ENCODE measurements at regions of chr19 and their contacts with region 1.

Region 1: GRCh38 chr19:1090727-1091543 is 4.2 kb downstream of the POLR2E start:
- DNase-seq: no peak
- ATAC-seq: no peak
- H3K4me3 ChIP-seq: no peak overlapping the region
- H3K27ac ChIP-seq: no peak overlapping the region
- H3K4me1 ChIP-seq: peaks cover 5% of the 10 kb centered on the region; the same call in 1 of the 2 replicates
- H3K27me3 ChIP-seq: no peaks in the 10 kb centered on the region
- CTCF ChIP-seq: no peak

Region 2: DNA sequence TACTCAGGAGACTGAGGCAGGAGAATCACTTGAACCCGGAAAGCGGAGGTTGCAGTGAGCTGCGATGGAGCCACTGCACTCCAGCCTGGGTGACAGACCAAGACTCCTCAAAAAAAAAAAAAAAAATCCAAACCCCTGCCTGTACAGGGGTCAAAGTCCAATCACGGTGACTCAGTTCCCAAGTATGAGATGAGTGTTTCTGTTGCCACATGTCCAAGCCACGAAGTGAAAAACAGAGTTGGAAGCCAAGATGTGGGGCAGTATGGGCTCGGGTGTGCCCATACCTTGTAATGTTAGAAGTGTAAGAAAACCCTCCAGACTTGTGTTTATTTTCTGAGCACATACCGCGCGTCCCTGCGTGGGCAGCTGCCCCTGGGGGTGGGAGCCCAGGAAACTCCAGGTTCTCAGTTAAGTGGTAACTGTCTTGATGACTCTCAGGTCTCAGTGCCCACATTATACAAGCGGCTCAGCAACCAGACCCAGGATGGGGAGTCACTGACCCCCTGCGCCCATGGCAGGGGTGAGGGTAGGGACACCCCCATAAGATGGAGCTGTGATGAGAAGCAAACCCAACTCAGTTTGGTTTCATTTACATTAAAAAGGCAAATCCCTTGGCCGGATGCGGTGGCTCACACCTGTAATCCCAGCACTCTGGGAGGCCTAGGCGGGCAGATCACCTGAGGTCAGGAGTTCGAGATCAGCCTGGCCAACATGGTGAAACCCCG is 11.6 kb after region 1 on chr19:
- CTCF ChIA-PET with region 1: no interaction called
- POLR2A ChIA-PET with region 1: interaction called, 10 read pairs
- in situ Hi-C with region 1: no loop called
- intact Hi-C with region 1: no loop called
- DNase-seq: peak; percentile 92
- ATAC-seq: peak; percentile 2; the same call in 1 of the 2 replicates
- H3K4me3 ChIP-seq: no peak overlapping the region; a peak in 1 of 4 replicates
- H3K27ac ChIP-seq: peak overlapping the region; percentile 84
- H3K4me1 ChIP-seq: peaks cover 46% of the 10 kb centered on the region
- H3K27me3 ChIP-seq: no peaks in the 10 kb centered on the region
- CTCF ChIP-seq: no peak